Mammary epithelial cell (primary cell): ENCODE measurements at regions of chrX and their contacts with region 1.

Region 1: GRCh38 chrX:104877504-104877903 is 311.5 kb downstream of the IL1RAPL2 start:
- DNase-seq: no peak
- H3K4me3 ChIP-seq: no peak overlapping the region
- H3K27ac ChIP-seq: no peak overlapping the region
- H3K4me1 ChIP-seq: no peaks in the 10 kb centered on the region
- H3K27me3 ChIP-seq: peaks cover 1% of the 10 kb centered on the region
- CTCF ChIP-seq: no peak

Region 2: GRCh38 chrX:104789791-104790190 is 87.7 kb before region 1 on chrX:
- CTCF ChIA-PET with region 1: no interaction called
- dilution Hi-C with region 1: loop called (anchors 5 kb)
- in situ Hi-C with region 1: no loop called
- intact Hi-C with region 1: no loop called
- DNase-seq: no peak
- H3K4me3 ChIP-seq: no peak overlapping the region
- H3K27ac ChIP-seq: no peak overlapping the region
- H3K4me1 ChIP-seq: no peaks in the 10 kb centered on the region
- H3K27me3 ChIP-seq: peaks cover 7% of the 10 kb centered on the region
- CTCF ChIP-seq: no peak

Region 3: GRCh38 chrX:104842326-104843045 is 35.0 kb before region 1 on chrX:
- CTCF ChIA-PET with region 1: no interaction called
- dilution Hi-C with region 1: no loop called
- in situ Hi-C with region 1: no loop called
- intact Hi-C with region 1: no loop called
- DNase-seq: no peak
- H3K4me3 ChIP-seq: no peak overlapping the region
- H3K27ac ChIP-seq: no peak overlapping the region
- H3K4me1 ChIP-seq: no peaks in the 10 kb centered on the region
- H3K27me3 ChIP-seq: peaks cover 2% of the 10 kb centered on the region
- CTCF ChIP-seq: no peak

Region 4: GRCh38 chrX:104935581-104935980 is 58.1 kb after region 1 on chrX:
- CTCF ChIA-PET with region 1: no interaction called
- dilution Hi-C with region 1: no loop called
- in situ Hi-C with region 1: no loop called
- intact Hi-C with region 1: no loop called
- DNase-seq: no peak
- H3K4me3 ChIP-seq: no peak overlapping the region
- H3K27ac ChIP-seq: no peak overlapping the region
- H3K4me1 ChIP-seq: no peaks in the 10 kb centered on the region
- H3K27me3 ChIP-seq: peaks cover 7% of the 10 kb centered on the region
- CTCF ChIP-seq: no peak